ENCODE measurements at regions of chr19 and their contacts with region 1.

Region 1: DNA sequence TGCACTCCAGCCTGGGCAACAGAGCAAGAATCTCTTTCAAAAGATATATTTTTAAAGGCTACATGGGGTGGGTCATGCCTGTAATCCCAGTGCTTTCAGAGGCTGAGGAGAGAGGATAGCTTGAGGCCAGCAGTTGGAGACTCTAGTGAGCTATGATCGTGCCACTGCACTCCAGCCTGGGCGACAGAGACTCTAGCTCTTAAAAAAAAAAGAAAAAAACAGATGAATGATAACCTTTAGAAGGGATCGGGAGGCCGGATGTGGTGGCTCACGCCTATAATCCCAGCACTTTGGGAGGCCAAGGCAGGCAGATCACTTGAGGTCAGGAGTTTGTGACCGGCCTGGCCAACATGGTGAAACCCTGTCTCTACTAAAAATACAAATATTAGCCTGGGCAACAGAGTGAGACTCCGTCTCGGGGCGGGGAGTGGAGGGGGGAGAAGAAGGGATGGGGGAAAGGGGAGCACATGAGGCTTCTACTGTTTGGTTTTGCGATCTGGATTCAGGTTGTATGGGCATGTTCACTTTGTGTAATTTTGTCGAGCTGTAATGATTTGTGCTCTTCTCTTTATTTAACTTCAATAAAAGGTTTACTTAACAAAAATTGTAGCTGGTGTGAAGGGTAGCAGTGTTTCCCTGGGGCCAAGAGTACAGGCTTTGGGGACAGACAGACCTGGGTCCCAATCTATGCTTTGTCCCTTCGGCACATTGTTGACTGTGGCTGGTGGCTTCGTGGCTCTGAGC is 1.1 kb upstream of the PSMC4 start:
- DNase-seq: no peak
- CTCF ChIP-seq: no peak

Region 2: GRCh38 chr19:39818626-39819097 is 151.2 kb before region 1 on chr19:
- in situ Hi-C with region 1: no loop called
- DNase-seq: peak; percentile 78
- CTCF ChIP-seq: no peak

Region 3: DNA sequence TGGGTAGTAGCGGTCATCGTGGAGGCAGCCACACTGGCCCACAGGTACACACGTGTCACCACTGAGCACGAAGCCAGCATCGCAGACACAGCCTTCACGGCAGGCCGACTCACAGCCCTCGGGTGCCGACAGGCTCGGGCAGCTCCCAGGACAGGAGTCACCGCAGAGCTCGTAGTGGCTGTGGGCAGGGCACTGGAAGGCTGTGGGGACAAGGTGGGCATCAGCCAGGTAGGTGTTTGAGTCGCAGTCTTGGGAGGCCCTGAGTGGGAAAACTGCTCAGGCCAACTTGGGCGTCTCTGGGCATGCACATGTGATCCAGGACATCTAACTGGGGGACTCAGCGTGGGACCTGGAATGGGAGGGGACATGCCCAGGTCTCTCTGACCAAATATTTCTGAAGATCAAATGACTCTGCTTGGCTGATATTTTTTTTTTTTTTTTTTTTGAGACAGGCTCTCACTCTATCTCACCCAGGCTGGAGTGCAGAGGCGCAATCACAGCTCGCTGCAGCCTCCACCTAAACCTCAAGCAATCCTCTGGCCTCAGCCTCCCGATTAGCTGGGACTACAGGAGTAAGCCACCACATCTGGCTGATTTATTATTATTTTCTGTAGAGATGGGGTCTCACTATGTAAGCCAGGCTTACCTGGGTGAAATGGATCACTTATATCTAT is 79.8 kb before region 1 on chr19:
- in situ Hi-C with region 1: loop called (anchors 10 kb)
- DNase-seq: no peak
- CTCF ChIP-seq: no peak

Region 4: GRCh38 chr19:39924389-39924788 is 45.5 kb before region 1 on chr19:
- in situ Hi-C with region 1: no loop called
- DNase-seq: no peak
- CTCF ChIP-seq: no peak